K562 (cell line): ENCODE measurements at regions of chr6 and their contacts with region 1.

Region 1: DNA sequence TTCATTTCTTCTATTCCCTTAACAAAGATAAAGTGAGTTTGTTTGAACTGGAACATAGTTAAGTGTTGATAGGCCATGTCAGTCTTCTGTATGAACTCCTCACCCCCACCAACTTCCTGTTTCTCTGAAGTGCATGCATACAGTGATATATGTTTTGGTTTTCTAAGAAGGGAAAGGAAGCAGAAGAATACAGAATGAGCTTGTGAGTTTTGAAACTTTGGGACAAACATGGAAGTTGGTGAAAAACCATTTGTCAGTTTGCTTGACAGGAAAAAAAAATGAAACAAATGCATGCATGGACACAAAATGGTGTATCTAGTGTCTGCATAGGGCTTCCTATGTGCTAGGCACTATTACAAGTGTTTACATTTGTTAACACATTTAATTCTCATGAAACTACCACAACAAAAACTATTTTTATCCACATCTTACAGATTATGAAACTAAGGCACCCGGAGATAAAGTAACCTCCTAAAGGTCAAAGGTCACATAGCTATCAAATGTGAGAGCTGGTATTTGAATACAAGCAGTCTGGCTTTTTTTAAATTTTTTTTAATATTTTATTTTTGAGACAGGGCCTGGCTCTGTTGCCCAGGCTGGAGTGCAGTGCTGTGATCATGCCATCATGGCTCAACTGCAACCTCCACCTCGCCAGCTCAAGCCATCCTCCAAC is 105.9 kb downstream of the ADGRB3 start:
- DNase-seq: peak in 3 of 4 experiments; percentile 17 to 82 (median 68)
- ATAC-seq: peak; percentile 78
- H3K4me3 ChIP-seq: no peak overlapping the region
- H3K27ac ChIP-seq: peak overlapping the region; percentile 91
- H3K4me1 ChIP-seq: peaks cover 6 to 51% of the 10 kb centered on the region in 2 experiments; a peak in 4 of 5 replicates
- H3K27me3 ChIP-seq: no peaks in the 10 kb centered on the region
- CTCF ChIP-seq: no peak
- EP300 ChIP-seq: peak; percentile 86
- POLR2A ChIP-seq: no peak
- RAD21 ChIP-seq: peak in 1 of 2 experiments; percentile 24; a peak in 1 of 4 replicates

Region 2: DNA sequence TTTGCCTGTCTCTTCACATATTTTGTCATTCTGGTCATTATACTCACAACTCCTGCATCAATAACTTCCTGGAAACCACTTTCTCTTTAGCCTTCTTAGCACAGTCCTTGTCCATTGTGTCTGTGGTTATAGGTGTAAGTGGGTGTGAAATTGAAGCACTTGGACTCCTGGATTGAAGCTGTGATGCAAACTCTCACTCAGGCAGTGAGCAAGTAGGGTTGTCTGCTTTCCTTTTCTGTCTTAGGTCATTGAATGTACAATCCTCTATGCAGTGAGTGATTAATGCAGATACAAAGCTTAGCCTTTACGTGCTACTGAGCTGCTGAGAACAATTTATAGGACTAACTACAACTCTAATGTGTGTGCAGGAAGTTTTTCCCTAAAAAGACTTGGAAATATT is 51.1 kb before region 1 on chr6:
- CTCF ChIA-PET with region 1: no interaction called
- POLR2A ChIA-PET with region 1: no interaction called
- in situ Hi-C with region 1: no loop called
- intact Hi-C with region 1: loop called (anchors 5 kb)
- DNase-seq: peak in 2 of 4 experiments; percentile 36 to 53
- ATAC-seq: peak; percentile 76
- H3K4me3 ChIP-seq: no peak overlapping the region
- H3K27ac ChIP-seq: peak overlapping the region; percentile 72
- H3K4me1 ChIP-seq: peaks cover 0 to 48% of the 10 kb centered on the region in 2 experiments; a peak in 3 of 5 replicates
- H3K27me3 ChIP-seq: no peaks in the 10 kb centered on the region
- CTCF ChIP-seq: no peak
- EP300 ChIP-seq: no peak
- POLR2A ChIP-seq: no peak
- RAD21 ChIP-seq: no peak

Region 3: GRCh38 chr6:68719761-68720160 is 21.2 kb before region 1 on chr6:
- CTCF ChIA-PET with region 1: no interaction called
- POLR2A ChIA-PET with region 1: no interaction called
- in situ Hi-C with region 1: no loop called
- intact Hi-C with region 1: no loop called
- DNase-seq: peak in 1 of 4 experiments; percentile 35
- ATAC-seq: 0 out of 3 replicates have a peak, but pooled peaks have one; percentile 27
- H3K4me3 ChIP-seq: no peak overlapping the region
- H3K27ac ChIP-seq: no peak overlapping the region
- H3K4me1 ChIP-seq: peaks cover 4 to 37% of the 10 kb centered on the region in 2 experiments; a peak in 3 of 5 replicates
- H3K27me3 ChIP-seq: no peaks in the 10 kb centered on the region
- CTCF ChIP-seq: no peak
- EP300 ChIP-seq: no peak
- POLR2A ChIP-seq: no peak
- RAD21 ChIP-seq: no peak

Region 4: DNA sequence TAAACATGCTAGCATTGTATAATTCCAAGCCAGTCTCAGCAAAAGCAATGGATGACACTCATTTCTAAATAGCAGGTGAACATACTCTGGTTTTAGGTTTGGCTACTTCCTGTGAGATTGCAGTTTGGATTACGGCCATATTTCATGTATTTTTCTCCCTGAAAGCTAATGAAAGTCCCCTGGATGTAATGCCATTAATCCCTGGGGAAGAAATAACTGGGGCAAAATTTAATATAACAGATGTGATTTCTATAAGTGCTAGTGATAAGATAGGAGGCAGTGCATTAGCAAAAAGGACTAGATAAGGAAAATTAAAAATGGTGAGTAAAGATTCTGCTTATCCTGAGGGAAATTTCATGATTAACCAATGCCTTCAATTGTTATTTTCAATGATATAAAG is 132.3 kb after region 1 on chr6:
- CTCF ChIA-PET with region 1: no interaction called
- POLR2A ChIA-PET with region 1: no interaction called
- in situ Hi-C with region 1: no loop called
- intact Hi-C with region 1: no loop called
- DNase-seq: no peak
- ATAC-seq: no peak
- H3K4me3 ChIP-seq: no peak overlapping the region
- H3K27ac ChIP-seq: no peak overlapping the region
- H3K4me1 ChIP-seq: no peaks in the 10 kb centered on the region
- H3K27me3 ChIP-seq: no peaks in the 10 kb centered on the region
- CTCF ChIP-seq: no peak
- EP300 ChIP-seq: no peak
- POLR2A ChIP-seq: no peak
- RAD21 ChIP-seq: no peak

Region 5: GRCh38 chr6:69105288-69105687 is 364.3 kb after region 1 on chr6:
- CTCF ChIA-PET with region 1: no interaction called
- POLR2A ChIA-PET with region 1: no interaction called
- in situ Hi-C with region 1: no loop called
- intact Hi-C with region 1: no loop called
- DNase-seq: no peak
- ATAC-seq: no peak
- H3K4me3 ChIP-seq: no peak overlapping the region
- H3K27ac ChIP-seq: no peak overlapping the region
- H3K4me1 ChIP-seq: no peaks in the 10 kb centered on the region
- H3K27me3 ChIP-seq: no peaks in the 10 kb centered on the region
- CTCF ChIP-seq: peak in 1 of 3 experiments; percentile 18; a peak in 1 of 6 replicates
- EP300 ChIP-seq: no peak
- POLR2A ChIP-seq: no peak
- RAD21 ChIP-seq: no peak